CD4-positive, alpha-beta T cell (primary cell): ENCODE measurements at regions of chr11 and their contacts with region 1.

Region 1: DNA sequence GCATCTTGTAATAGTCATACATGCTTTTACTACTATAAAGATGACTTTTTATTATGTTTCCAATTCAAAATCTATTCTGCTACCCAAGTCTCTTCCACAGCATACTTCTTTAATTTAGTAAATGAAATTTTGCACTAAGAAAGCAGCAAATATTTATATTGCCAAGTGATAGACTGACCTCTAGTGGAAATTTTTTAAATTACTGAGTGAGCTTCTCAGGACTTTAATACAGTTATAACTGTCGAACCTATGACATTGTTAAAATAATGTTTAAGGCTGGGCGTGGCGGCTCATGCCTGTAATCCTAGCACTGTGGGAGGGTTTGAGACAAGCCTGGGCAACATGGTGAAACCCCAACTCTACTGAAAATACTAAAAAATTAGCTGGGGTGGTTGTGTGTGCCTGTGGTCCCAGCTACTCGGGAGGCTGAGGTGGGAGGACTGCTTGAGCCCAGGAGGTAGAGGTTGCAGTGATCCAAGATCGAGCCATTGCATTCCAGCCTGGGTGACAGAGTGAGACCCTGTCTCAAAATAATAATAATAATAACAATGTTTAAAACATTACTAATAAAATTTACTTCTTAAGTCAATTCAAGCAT is 27.3 kb downstream of the STK33 start:
- DNase-seq: peak in 3 of 14 experiments; percentile 39 to 46 (median 46)
- ATAC-seq: no peak
- H3K4me3 ChIP-seq: no peak overlapping the region
- H3K4me3 Mint-ChIP-seq: no peak overlapping the region
- H3K27ac ChIP-seq: no peak overlapping the region
- H3K27ac Mint-ChIP-seq: no peak overlapping the region
- H3K4me1 ChIP-seq: no peaks in the 10 kb centered on the region
- H3K4me1 Mint-ChIP-seq: no peaks in the 10 kb centered on the region
- H3K27me3 ChIP-seq: peaks cover 1 to 9% of the 10 kb centered on the region in 2 experiments
- H3K27me3 Mint-ChIP-seq: peaks cover 56% of the 10 kb centered on the region
- CTCF ChIP-seq: peak; percentile 76

Region 2: GRCh38 chr11:8033305-8034105 is 533.2 kb before region 1 on chr11:
- CTCF ChIA-PET with region 1: interaction called, 6 read pairs
- POLR2A ChIA-PET with region 1: no interaction called
- intact Hi-C with region 1: loop called in 1 of 2 experiments (anchors 5 kb)
- DNase-seq: peak; percentile 12 to 75 (median 32)
- ATAC-seq: peak; percentile 84
- H3K4me3 ChIP-seq: no peak overlapping the region
- H3K4me3 Mint-ChIP-seq: no peak overlapping the region
- H3K27ac ChIP-seq: no peak overlapping the region
- H3K27ac Mint-ChIP-seq: no peak overlapping the region
- H3K4me1 ChIP-seq: peaks cover 8% of the 10 kb centered on the region
- H3K4me1 Mint-ChIP-seq: peaks cover 7% of the 10 kb centered on the region
- H3K27me3 ChIP-seq: peaks cover 5 to 6% of the 10 kb centered on the region in 2 experiments
- H3K27me3 Mint-ChIP-seq: peaks cover 51% of the 10 kb centered on the region
- CTCF ChIP-seq: peak; percentile 79

Region 3: DNA sequence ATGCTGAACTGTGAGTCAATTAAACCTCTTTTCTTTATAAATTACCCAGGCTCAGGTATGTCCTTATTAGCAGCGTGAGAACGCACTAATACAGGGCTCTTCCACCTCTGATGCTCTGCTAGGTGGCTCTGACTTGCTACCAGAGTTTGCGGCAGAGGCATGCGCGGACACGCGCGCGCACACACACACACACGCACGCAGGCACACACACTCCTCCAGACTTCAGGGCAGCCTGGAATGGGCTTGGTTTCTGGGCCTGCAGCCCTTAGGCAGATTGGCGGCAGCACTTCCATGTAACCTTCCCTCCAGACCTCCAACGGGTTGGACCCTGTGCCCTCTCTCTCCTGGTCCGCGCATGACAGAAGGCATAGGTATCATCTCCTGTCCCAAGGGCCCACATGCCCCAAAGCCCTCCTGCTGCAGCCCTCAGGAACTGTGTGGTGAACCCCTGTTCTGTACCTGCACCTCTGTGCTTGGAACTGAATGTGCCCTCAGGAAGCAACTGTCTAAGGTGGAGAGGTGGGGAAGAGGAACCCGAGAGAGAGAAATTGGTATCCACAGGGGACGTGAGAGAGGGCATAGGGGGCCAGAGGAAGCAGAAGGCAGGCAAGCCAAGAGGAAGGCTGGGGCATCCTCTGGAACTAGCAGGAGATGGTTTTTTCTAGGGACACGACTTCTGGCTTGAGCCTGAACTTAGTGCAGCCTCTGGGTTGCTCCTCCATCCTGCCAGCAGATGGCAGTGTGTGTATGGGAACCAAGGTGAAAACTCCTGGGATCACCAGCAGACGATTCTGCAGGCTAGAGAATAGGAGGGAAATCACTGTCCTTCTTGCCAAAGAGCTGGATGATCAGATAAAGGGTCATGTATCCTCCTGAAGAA is 374.5 kb before region 1 on chr11:
- CTCF ChIA-PET with region 1: no interaction called
- POLR2A ChIA-PET with region 1: no interaction called
- intact Hi-C with region 1: loop called (anchors 1 kb)
- DNase-seq: peak in 11 of 14 experiments; percentile 7 to 59 (median 23)
- ATAC-seq: no peak
- H3K4me3 ChIP-seq: no peak overlapping the region
- H3K4me3 Mint-ChIP-seq: no peak overlapping the region
- H3K27ac ChIP-seq: no peak overlapping the region
- H3K27ac Mint-ChIP-seq: no peak overlapping the region
- H3K4me1 ChIP-seq: no peaks in the 10 kb centered on the region
- H3K4me1 Mint-ChIP-seq: no peaks in the 10 kb centered on the region
- H3K27me3 ChIP-seq: peaks cover 6 to 24% of the 10 kb centered on the region in 2 experiments
- H3K27me3 Mint-ChIP-seq: peaks cover 72% of the 10 kb centered on the region
- CTCF ChIP-seq: peak; percentile 74

Region 4: GRCh38 chr11:8488395-8488794 is 78.3 kb before region 1 on chr11:
- CTCF ChIA-PET with region 1: no interaction called
- POLR2A ChIA-PET with region 1: no interaction called
- intact Hi-C with region 1: no loop called
- DNase-seq: no peak
- ATAC-seq: no peak
- H3K4me3 ChIP-seq: no peak overlapping the region
- H3K4me3 Mint-ChIP-seq: no peak overlapping the region
- H3K27ac ChIP-seq: no peak overlapping the region
- H3K27ac Mint-ChIP-seq: no peak overlapping the region
- H3K4me1 ChIP-seq: no peaks in the 10 kb centered on the region
- H3K4me1 Mint-ChIP-seq: no peaks in the 10 kb centered on the region
- H3K27me3 ChIP-seq: peaks cover 0 to 3% of the 10 kb centered on the region in 2 experiments
- H3K27me3 Mint-ChIP-seq: peaks cover 10% of the 10 kb centered on the region
- CTCF ChIP-seq: no peak

Region 5: DNA sequence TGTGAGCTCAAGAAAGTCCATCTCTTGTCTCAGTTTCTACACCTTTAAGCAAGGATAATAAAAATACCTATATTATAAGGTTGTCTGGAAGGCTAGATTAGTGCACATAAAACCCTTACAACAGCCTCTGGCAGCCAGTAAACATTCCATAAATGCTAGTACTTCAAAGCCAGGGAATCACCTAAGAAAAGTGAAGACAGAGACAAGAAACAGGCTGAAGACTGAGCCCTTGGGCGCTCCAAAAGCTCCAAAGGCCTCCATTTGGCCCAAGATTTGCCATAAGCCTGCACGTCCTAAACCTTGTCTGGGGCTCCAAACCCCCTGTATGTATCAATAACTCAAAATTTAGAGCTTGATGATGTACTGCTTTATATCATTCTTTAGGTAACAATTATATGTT is 292.1 kb after region 1 on chr11:
- CTCF ChIA-PET with region 1: no interaction called
- POLR2A ChIA-PET with region 1: no interaction called
- intact Hi-C with region 1: no loop called
- DNase-seq: no peak
- ATAC-seq: no peak
- H3K4me3 ChIP-seq: no peak overlapping the region
- H3K4me3 Mint-ChIP-seq: no peak overlapping the region
- H3K27ac ChIP-seq: no peak overlapping the region
- H3K27ac Mint-ChIP-seq: no peak overlapping the region
- H3K4me1 ChIP-seq: no peaks in the 10 kb centered on the region
- H3K4me1 Mint-ChIP-seq: no peaks in the 10 kb centered on the region
- H3K27me3 ChIP-seq: peaks cover 0 to 9% of the 10 kb centered on the region in 2 experiments
- H3K27me3 Mint-ChIP-seq: peaks cover 39% of the 10 kb centered on the region
- CTCF ChIP-seq: no peak